HCT116 (cell line): ENCODE measurements at regions of chr22 and their contacts with region 1.

Region 1: GRCh38 chr22:39170825-39171622 is 18.5 kb upstream of the CBX7 start:
- DNase-seq: peak; percentile 50
- ATAC-seq: peak; percentile 87
- H3K4me3 ChIP-seq: no peak overlapping the region
- H3K27ac ChIP-seq: no peak overlapping the region
- H3K4me1 ChIP-seq: peaks cover 28 to 46% of the 10 kb centered on the region in 2 experiments
- H3K27me3 ChIP-seq: no peaks in the 10 kb centered on the region
- CTCF ChIP-seq: peak; percentile 90 to 97 (median 92)
- POLR2A ChIP-seq: no peak
- RAD21 ChIP-seq: peak; percentile 100

Region 2: GRCh38 chr22:39205338-39206021 is 34.5 kb after region 1 on chr22:
- CTCF ChIA-PET with region 1: no interaction called
- POLR2A ChIA-PET with region 1: no interaction called
- RAD21 ChIA-PET with region 1: no interaction called
- intact Hi-C with region 1: loop called (anchors 5 kb)
- DNase-seq: peak; percentile 46
- ATAC-seq: peak; percentile 95
- H3K4me3 ChIP-seq: peak overlapping the region; percentile 16 to 27; a peak in 2 of 4 replicates
- H3K27ac ChIP-seq: peak overlapping the region; percentile 45
- H3K4me1 ChIP-seq: peaks cover 35 to 57% of the 10 kb centered on the region in 2 experiments
- H3K27me3 ChIP-seq: no peaks in the 10 kb centered on the region
- CTCF ChIP-seq: no peak
- POLR2A ChIP-seq: no peak
- RAD21 ChIP-seq: no peak

Region 3: DNA sequence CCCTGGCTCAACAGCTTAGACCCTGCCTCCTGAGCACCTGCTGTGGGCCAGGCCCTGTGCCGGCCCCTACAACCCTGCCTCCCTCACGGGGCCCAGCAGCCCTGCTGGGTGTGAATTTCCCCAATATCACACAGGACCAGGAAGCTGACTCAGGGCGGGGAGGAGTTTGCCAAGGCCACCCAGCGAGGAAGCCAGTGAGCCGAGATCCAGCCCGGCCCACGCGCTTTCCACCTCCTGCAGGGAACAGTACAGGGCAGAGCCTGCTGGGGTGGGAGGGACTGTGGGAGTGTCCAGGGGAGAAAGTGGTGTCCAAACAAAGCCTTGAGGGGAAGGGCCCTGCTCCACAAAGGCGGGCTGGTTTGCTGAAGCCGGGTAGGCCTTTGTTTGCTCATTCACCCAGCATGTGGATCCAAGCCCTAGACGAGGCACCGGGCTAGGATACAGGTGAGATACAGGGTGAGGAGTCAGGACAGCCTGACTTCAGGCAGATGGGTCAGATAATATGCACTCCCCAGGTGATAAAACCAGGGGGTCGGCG is 121.6 kb after region 1 on chr22:
- CTCF ChIA-PET with region 1: interaction called, 8 read pairs
- POLR2A ChIA-PET with region 1: no interaction called
- RAD21 ChIA-PET with region 1: no interaction called
- intact Hi-C with region 1: loop called (anchors 5 kb)
- DNase-seq: peak; percentile 93
- ATAC-seq: peak; percentile 82
- H3K4me3 ChIP-seq: peak overlapping the region; percentile 18 to 41
- H3K27ac ChIP-seq: peak overlapping the region; percentile 98
- H3K4me1 ChIP-seq: peaks cover 61 to 95% of the 10 kb centered on the region in 2 experiments
- H3K27me3 ChIP-seq: no peaks in the 10 kb centered on the region
- CTCF ChIP-seq: no peak
- POLR2A ChIP-seq: peak; percentile 86
- RAD21 ChIP-seq: no peak